Mammary epithelial cell (primary cell): ENCODE measurements at regions of chr4 and their contacts with region 1.

Region 1: GRCh38 chr4:69881173-69881773 is 21.3 kb upstream of the SULT1E1 start:
- DNase-seq: peak; percentile 27
- H3K4me3 ChIP-seq: no peak overlapping the region
- H3K27ac ChIP-seq: no peak overlapping the region
- H3K4me1 ChIP-seq: no peaks in the 10 kb centered on the region
- H3K27me3 ChIP-seq: no peaks in the 10 kb centered on the region
- CTCF ChIP-seq: peak; percentile 92 to 93

Region 2: DNA sequence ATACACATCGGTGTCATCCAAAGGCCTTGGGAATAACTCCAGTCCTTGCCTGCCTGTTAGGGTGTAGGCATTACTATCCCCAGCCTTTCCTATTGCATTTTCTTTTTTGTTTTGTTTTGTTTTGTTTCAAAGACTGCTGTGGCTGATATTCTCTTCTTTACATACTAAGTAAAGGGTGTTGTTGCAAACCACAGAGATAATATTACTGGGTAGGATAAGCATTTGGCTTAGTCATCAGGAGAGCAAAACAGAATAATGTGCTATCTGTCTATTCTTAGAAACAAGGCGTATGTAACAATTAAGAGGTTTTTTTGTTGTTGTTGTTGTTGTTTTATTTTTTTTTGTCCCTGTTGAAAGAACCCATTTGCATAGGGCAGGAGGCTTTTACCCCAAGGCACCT is 559.2 kb before region 1 on chr4:
- CTCF ChIA-PET with region 1: no interaction called
- dilution Hi-C with region 1: no loop called
- in situ Hi-C with region 1: no loop called
- intact Hi-C with region 1: loop called (anchors 5 kb)
- DNase-seq: peak; percentile 53
- H3K4me3 ChIP-seq: no peak overlapping the region
- H3K27ac ChIP-seq: no peak overlapping the region
- H3K4me1 ChIP-seq: peaks cover 8% of the 10 kb centered on the region
- H3K27me3 ChIP-seq: no peaks in the 10 kb centered on the region
- CTCF ChIP-seq: no peak

Region 3: GRCh38 chr4:69668680-69669079 is 212.6 kb before region 1 on chr4:
- CTCF ChIA-PET with region 1: no interaction called
- dilution Hi-C with region 1: no loop called
- in situ Hi-C with region 1: no loop called
- intact Hi-C with region 1: no loop called
- DNase-seq: no peak
- H3K4me3 ChIP-seq: no peak overlapping the region
- H3K27ac ChIP-seq: no peak overlapping the region
- H3K4me1 ChIP-seq: no peaks in the 10 kb centered on the region
- H3K27me3 ChIP-seq: peaks cover 2% of the 10 kb centered on the region
- CTCF ChIP-seq: no peak

Region 4: GRCh38 chr4:69697536-69698242 is 183.6 kb before region 1 on chr4:
- CTCF ChIA-PET with region 1: no interaction called
- dilution Hi-C with region 1: no loop called
- in situ Hi-C with region 1: loop called (anchors 5 kb)
- intact Hi-C with region 1: no loop called
- DNase-seq: peak; percentile 77
- H3K4me3 ChIP-seq: no peak overlapping the region
- H3K27ac ChIP-seq: peak overlapping the region; percentile 36
- H3K4me1 ChIP-seq: peaks cover 8% of the 10 kb centered on the region
- H3K27me3 ChIP-seq: no peaks in the 10 kb centered on the region
- CTCF ChIP-seq: no peak

Region 5: GRCh38 chr4:69823481-69824186 is 57.6 kb before region 1 on chr4:
- CTCF ChIA-PET with region 1: no interaction called
- dilution Hi-C with region 1: no loop called
- in situ Hi-C with region 1: no loop called
- intact Hi-C with region 1: loop called (anchors 1 kb)
- DNase-seq: peak; percentile 34
- H3K4me3 ChIP-seq: no peak overlapping the region
- H3K27ac ChIP-seq: no peak overlapping the region
- H3K4me1 ChIP-seq: no peaks in the 10 kb centered on the region
- H3K27me3 ChIP-seq: no peaks in the 10 kb centered on the region
- CTCF ChIP-seq: peak; percentile 76 to 88

Region 6: GRCh38 chr4:69830560-69831289 is 50.5 kb before region 1 on chr4:
- CTCF ChIA-PET with region 1: no interaction called
- dilution Hi-C with region 1: no loop called
- in situ Hi-C with region 1: no loop called
- intact Hi-C with region 1: loop called (anchors 2 kb)
- DNase-seq: peak; percentile 34
- H3K4me3 ChIP-seq: no peak overlapping the region
- H3K27ac ChIP-seq: no peak overlapping the region
- H3K4me1 ChIP-seq: peaks cover 4% of the 10 kb centered on the region
- H3K27me3 ChIP-seq: no peaks in the 10 kb centered on the region
- CTCF ChIP-seq: peak in 1 of 2 donors; percentile 3